Heart left ventricle (tissue), 16 donors: ENCODE measurements at regions of chr21 and their contacts with region 1.

Region 1: DNA sequence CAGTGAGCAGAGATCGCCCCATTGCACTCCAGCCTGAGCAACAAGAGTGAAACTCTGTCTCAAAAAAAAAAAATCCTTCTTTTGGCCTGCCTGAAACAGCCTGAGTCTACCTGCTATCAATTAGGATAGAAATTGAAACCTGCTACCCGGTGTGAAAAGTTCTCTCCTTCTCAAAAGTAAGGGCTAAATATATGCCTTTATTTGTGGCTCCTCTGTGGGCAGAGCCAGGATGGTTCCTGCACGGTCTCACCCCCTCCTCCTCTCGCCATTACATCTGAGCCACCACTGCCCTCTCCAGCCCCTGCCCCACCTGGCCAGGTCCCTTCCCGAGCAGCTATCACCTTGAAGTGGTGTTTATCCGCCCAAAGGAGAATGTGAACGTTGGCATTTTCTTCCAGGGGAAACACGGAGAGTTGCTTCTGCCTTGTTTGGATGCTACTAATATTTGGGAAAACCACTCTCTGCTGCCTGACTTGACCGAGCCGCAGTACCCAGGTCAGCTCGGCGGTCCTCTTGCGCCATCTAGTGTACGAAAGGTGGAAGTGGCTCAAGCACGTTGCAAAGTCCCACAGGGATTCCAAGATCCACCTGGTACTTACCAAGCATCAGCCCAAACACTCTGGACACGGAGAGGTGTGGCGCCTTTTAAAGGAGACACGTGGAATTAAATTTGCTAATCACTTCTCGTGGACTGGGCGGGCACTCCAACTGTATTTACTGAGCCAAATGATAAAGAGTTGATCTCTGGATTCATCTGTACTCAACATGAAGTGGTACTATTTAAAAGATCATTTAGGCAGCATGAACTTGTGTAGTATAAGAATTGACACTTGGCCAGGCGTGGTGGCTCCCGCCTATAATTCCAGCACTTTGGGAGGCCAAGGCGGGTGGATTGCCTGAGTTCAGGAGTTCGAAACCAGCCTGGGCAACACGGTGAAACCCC is 31.9 kb downstream of the SETD4 start:
- DNase-seq: peak; percentile 58 to 78 (median 70)
- ATAC-seq: peak; percentile 75 to 90 (median 85)
- H3K4me3 ChIP-seq: no peak overlapping the region
- H3K27ac ChIP-seq: no peak overlapping the region
- H3K4me1 ChIP-seq: peaks cover 0 to 4% (median 0%) of the 10 kb centered on the region in 12 donors
- H3K27me3 ChIP-seq: no peaks in the 10 kb centered on the region
- CTCF ChIP-seq: peak; percentile 87 to 98 (median 94)
- POLR2A ChIP-seq: no peak

Region 2: DNA sequence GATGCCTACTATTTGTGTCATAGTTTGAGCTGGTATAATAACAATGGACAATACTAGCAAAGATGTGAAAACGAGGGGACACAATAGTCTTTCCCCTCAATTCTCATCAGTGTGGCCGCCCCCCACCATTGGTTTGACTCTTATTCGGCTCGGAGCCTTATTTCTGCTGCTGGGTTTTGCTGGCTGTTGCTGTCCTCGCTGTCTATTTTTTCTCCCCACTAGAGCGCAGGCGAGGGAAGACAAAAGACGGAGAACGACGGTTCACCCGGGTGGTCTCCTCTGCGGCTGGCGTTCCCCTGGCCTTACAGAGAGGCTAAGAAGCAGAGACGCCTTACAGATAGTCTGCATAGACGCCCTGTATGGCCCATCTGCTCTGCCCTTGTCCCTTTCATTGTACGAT is 1340.3 kb before region 1 on chr21:
- intact Hi-C with region 1: loop called in 4 of 10 experiments (anchors 2 to 5 kb)
- DNase-seq: peak in 1 of 5 donors; percentile 57
- ATAC-seq: no peak
- H3K4me3 ChIP-seq: no peak overlapping the region
- H3K27ac ChIP-seq: no peak overlapping the region
- H3K4me1 ChIP-seq: peaks cover 0 to 15% (median 0%) of the 10 kb centered on the region in 12 donors
- H3K27me3 ChIP-seq: no peaks in the 10 kb centered on the region
- CTCF ChIP-seq: peak in 5 of 12 donors; percentile 38 to 62 (median 54)
- POLR2A ChIP-seq: no peak

Region 3: DNA sequence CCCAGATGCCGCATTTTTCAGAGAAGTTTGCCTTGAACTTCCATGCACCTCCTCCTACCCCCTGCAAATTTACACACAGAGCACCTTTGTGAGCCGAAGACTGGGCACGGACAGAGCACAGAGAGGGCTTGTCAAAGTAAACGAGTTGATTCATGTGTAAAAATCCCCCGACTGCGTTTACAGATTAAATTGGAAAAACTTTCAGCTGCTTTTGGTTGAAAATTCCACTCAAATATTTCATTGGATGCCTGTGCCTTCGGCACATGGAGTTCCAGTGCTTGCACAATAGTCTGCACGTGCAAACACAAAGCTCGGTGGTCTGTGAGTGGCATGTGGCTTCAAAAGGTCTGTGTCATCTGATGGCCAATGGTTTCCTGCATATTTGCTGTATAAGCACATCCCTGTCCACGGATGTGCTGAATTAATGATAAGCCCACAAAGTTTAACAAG is 145.6 kb before region 1 on chr21:
- intact Hi-C with region 1: loop called in 1 of 10 experiments (anchors 5 kb)
- DNase-seq: no peak
- ATAC-seq: no peak
- H3K4me3 ChIP-seq: no peak overlapping the region
- H3K27ac ChIP-seq: no peak overlapping the region
- H3K4me1 ChIP-seq: no peaks in the 10 kb centered on the region
- H3K27me3 ChIP-seq: peaks cover 0 to 14% (median 0%) of the 10 kb centered on the region in 9 donors
- CTCF ChIP-seq: no peak
- POLR2A ChIP-seq: no peak